ENCODE measurements at regions of chr7 and their contacts with region 1.

Region 1: DNA sequence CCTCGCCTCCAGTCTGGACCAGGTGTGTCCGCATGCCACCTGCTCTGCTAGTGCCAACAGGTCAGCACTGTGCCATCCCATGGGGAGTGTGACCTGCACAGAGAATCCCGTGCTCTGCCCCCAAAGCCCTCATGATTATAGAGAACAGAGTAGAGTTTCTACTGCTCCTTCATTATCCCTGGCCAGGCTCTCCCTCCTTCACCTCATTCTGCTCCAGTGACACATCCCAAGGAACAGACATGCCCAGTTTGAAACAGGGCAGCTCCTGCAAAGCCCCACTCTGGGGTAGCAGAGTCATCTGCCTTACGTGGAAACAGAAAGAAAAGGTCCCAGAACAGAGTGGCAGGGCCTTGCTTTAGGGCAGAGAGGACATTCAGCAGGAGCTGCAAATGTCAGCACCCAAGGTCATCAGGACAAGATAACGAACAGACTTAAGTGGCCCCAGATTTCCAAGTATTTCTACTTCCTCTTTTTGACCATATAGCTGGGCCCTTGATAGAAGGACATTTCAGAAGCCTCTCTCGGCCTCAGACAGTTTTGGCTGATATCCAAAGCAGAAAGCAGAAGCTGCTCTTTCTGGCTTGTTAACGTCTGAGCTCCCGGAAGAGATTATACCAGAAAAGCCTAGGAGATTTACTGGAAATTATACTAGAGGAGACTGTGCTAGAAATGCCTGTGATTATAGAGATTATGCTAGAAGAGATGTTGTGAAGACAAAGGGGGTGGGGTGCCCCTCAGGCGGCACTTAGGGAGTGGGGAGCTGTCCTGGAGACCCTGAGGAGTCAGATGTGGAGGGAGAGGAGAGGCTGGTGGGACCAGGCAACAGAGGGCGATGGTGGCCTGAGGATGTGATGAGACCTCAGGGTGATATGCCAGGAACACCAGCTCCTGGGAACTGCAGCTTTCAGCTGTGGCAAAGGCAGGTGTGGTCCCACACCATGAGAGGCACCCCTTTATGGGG is 12.6 kb downstream of the TMEM176B start:
- H3K4me3 Mint-ChIP-seq: peak overlapping the region; percentile 51
- H3K27ac Mint-ChIP-seq: peak overlapping the region; percentile 98
- H3K4me1 Mint-ChIP-seq: peaks cover 6% of the 10 kb centered on the region
- H3K27me3 Mint-ChIP-seq: no peaks in the 10 kb centered on the region

Region 2: GRCh38 chr7:150799741-150800580 is 12.4 kb after region 1 on chr7 and contains the start of gene TMEM176B:
- intact Hi-C with region 1: loop called (anchors 1 kb)
- H3K4me3 Mint-ChIP-seq: peak within 1 kb of the TSS; percentile 96
- H3K27ac Mint-ChIP-seq: peak within 1 kb of the TSS; percentile 96
- H3K4me1 Mint-ChIP-seq: peaks cover 48% of the 10 kb centered on the region
- H3K27me3 Mint-ChIP-seq: no peaks in the 10 kb centered on the region

Region 3: GRCh38 chr7:151080522-151081169 is 293.0 kb after region 1 on chr7 and contains the start of gene FASTK:
- intact Hi-C with region 1: loop called (anchors 10 kb)
- H3K4me3 Mint-ChIP-seq: peak within 1 kb of the TSS; percentile 86
- H3K27ac Mint-ChIP-seq: peak within 1 kb of the TSS; percentile 89
- H3K4me1 Mint-ChIP-seq: peaks cover 65% of the 10 kb centered on the region
- H3K27me3 Mint-ChIP-seq: no peaks in the 10 kb centered on the region

Measured in dendritic cell treated with granulocyte-macrophage colony-stimulating factor and Interleukin-4, amounts not matched to agents 40 ng/mL and 50 ng/mL, for 4 days (primary cell).